Heart left ventricle (tissue), 16 donors: ENCODE measurements at regions of chr17 and their contacts with region 1.

Region 1: DNA sequence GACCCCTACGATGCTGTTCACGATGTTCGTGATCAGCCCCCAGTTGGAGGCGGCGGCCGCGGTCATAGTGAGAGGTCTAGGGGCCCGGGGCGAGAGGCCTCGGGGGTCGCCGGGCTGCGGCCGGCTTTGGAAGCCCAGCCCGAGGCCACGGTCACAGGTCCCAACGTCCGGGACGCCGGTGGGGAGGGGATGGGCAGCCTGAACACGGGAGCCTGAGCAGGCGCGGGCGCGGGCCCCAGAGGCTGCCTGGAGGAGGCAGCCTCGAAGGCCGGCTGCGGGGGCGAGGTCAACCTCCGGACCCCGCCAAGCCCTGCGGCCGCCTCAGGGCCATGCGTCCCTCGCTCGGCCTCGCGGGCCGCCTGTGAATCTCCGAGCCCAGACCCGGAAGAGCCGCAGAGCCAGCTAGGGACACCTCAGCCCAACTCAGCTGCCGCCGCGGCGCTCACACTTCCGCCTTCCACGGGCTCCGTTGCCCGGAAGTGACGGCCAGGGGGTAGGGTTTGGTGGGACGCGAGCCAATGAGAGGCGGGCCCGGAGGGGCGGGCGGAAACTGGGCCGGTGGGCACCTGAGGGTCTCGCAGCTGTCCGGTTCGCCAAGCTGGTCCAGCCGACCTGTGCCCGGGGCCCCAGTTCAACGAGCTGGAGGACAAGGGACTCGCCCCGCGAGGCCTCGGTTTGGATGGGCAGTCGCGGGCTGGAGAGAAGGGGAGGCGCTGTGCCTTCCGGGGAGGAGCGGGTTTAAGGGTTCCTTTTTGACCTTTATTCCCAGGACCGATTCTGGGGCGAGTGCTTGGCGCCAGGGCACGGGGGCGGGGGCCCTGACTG is at the start of gene SLC38A10:
- DNase-seq: peak; percentile 93 to 98 (median 94)
- ATAC-seq: peak; percentile 81 to 94 (median 94)
- H3K4me3 ChIP-seq: peak within 1 kb of the TSS; percentile 57 to 97 (median 85)
- H3K27ac ChIP-seq: peak within 1 kb of the TSS; percentile 85 to 99 (median 96)
- H3K4me1 ChIP-seq: peaks cover 8 to 49% (median 31%) of the 10 kb centered on the region in 12 donors
- H3K27me3 ChIP-seq: no peaks in the 10 kb centered on the region
- CTCF ChIP-seq: peak in 4 of 12 donors; percentile 16 to 63 (median 24)
- POLR2A ChIP-seq: peak; percentile 44 to 94
- total RNA-seq, gene SLC38A10: 27.4 to 67.7 (median 43.1) TPM

Region 2: DNA sequence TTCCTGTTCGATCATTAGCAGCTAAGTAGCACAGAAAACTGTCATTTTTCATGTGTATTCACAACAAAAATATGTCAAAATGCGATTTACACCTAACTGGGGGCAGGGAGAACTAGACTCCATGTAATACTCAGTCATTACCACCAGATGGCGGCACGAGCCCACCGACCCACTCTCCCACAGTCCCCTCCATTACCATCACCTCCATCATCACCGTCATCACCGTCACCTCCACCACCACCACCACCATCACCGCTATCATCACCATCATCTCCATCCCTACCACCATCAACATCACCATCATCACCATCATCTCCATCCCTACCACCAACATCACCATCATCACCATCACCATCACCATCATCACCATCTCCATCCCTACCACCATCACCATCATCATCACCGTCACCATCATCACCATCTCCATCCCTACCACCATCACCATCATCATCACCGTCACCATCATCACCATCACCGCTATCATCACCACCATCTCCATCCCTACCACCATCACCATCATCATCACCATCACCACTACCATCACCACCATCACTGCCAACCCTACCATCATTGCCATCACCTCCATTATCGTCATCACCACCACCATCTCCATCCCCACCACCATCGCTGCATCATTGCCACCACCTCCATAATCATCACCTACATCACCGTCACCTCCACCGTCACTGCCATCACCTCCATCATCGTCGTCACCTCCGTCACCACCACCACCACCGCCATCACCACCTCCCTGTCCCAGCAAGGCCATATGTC is 41.5 kb before region 1 on chr17:
- intact Hi-C with region 1: loop called in 3 of 10 experiments (anchors 2 to 5 kb)
- DNase-seq: peak in 1 of 5 donors; percentile 52
- ATAC-seq: peak in 3 of 4 donors; percentile 33 to 45 (median 35)
- H3K4me3 ChIP-seq: no peak overlapping the region
- H3K27ac ChIP-seq: no peak overlapping the region
- H3K4me1 ChIP-seq: peaks cover 3 to 19% (median 13%) of the 10 kb centered on the region in 12 donors
- H3K27me3 ChIP-seq: no peaks in the 10 kb centered on the region
- CTCF ChIP-seq: peak; percentile 66 to 88 (median 81)
- POLR2A ChIP-seq: no peak

Region 3: GRCh38 chr17:81346090-81346907 is 51.2 kb after region 1 on chr17:
- intact Hi-C with region 1: no loop called
- DNase-seq: peak; percentile 98 to 100 (median 99)
- ATAC-seq: peak; percentile 87 to 94 (median 92)
- H3K4me3 ChIP-seq: peak overlapping the region; percentile 39 to 93 (median 77)
- H3K27ac ChIP-seq: peak overlapping the region; percentile 82 to 99 (median 96)
- H3K4me1 ChIP-seq: peaks cover 0 to 60% (median 17%) of the 10 kb centered on the region in 12 donors
- H3K27me3 ChIP-seq: peaks cover 0 to 28% (median 0%) of the 10 kb centered on the region in 9 donors
- CTCF ChIP-seq: no peak
- POLR2A ChIP-seq: peak in 1 of 2 donors; percentile 91

Region 4: GRCh38 chr17:81381632-81382577 is 86.8 kb after region 1 on chr17:
- intact Hi-C with region 1: loop called in 3 of 10 experiments (anchors 5 to 10 kb)
- DNase-seq: peak in 1 of 5 donors; percentile 64
- ATAC-seq: no peak
- H3K4me3 ChIP-seq: no peak overlapping the region
- H3K27ac ChIP-seq: no peak overlapping the region
- H3K4me1 ChIP-seq: peaks cover 0 to 16% (median 10%) of the 10 kb centered on the region in 12 donors
- H3K27me3 ChIP-seq: peaks cover 0 to 5% (median 0%) of the 10 kb centered on the region in 9 donors
- CTCF ChIP-seq: no peak
- POLR2A ChIP-seq: no peak

Region 5: GRCh38 chr17:81387100-81388090 is 92.3 kb after region 1 on chr17:
- intact Hi-C with region 1: loop called in 5 of 10 experiments (anchors 2 to 10 kb)
- DNase-seq: peak in 4 of 5 donors; percentile 71 to 83 (median 78)
- ATAC-seq: peak; percentile 6 to 71 (median 45)
- H3K4me3 ChIP-seq: peak overlapping the region; percentile 61 to 91 (median 77)
- H3K27ac ChIP-seq: peak overlapping the region; percentile 79 to 100 (median 97)
- H3K4me1 ChIP-seq: peaks cover 5 to 66% (median 46%) of the 10 kb centered on the region in 12 donors
- H3K27me3 ChIP-seq: peaks cover 0 to 5% (median 0%) of the 10 kb centered on the region in 9 donors
- CTCF ChIP-seq: no peak
- POLR2A ChIP-seq: peak in 1 of 2 donors; percentile 48

Region 6: GRCh38 chr17:81394921-81395599 is 100.0 kb after region 1 on chr17 and contains the start of gene BAHCC1:
- intact Hi-C with region 1: loop called in 6 of 10 experiments (anchors 2 to 10 kb)
- DNase-seq: peak; percentile 100
- ATAC-seq: peak; percentile 80 to 89 (median 87)
- H3K4me3 ChIP-seq: peak within 1 kb of the TSS; percentile 57 to 95 (median 80)
- H3K27ac ChIP-seq: peak within 1 kb of the TSS; percentile 91 to 100 (median 97)
- H3K4me1 ChIP-seq: peaks cover 6 to 67% (median 30%) of the 10 kb centered on the region in 12 donors
- H3K27me3 ChIP-seq: peaks cover 0 to 14% (median 0%) of the 10 kb centered on the region in 9 donors
- CTCF ChIP-seq: no peak
- POLR2A ChIP-seq: peak; percentile 55 to 98
- total RNA-seq, gene BAHCC1: 6.0 to 19.6 (median 9.3) TPM

Region 7: DNA sequence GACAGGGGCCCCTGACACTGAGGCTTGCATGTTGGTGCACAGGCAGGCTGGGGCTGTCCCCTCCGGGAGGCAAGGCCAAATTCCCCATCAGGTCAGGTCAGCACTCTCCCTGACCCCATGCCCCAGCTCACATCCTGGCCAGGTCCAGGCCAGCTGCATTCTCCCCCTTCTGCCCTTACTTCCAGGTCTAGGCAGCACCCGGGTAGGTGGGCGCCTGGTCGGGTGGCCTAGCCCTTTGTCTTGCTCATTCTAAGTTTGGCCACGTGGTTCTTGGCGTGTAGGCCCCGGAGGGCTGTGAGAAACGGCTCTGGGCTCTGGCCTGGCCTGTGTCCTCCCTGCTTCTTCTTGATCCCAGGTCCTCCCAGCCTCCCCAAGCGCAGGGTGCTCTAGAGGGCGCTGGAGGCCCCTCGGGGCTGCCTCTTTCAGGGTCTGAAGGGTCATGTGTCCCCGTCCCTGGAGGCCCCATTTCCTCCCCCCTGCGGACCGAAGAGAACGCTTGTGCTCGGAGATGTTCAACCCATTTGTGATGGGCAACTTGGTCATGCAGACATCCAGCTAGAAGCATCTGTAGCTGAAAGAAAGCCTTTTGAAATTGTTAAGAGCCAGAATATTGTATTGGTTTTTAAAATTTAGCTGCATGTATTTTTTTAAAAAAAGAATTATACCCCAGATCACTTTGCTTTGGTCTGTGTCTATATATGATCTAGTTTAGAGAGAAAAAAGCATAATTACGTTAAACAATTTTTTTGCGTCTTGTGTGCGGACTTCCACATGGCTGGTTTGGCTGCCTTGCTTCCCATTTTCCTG is 106.9 kb after region 1 on chr17:
- intact Hi-C with region 1: loop called in 3 of 10 experiments (anchors 5 to 10 kb)
- DNase-seq: peak in 2 of 5 donors; percentile 74
- ATAC-seq: peak in 3 of 4 donors; percentile 6 to 16 (median 7)
- H3K4me3 ChIP-seq: peak overlapping the region in 8 of 12 donors; percentile 6 to 95 (median 80)
- H3K27ac ChIP-seq: peak overlapping the region; percentile 51 to 98 (median 97)
- H3K4me1 ChIP-seq: peaks cover 16 to 88% (median 66%) of the 10 kb centered on the region in 12 donors
- H3K27me3 ChIP-seq: peaks cover 0 to 15% (median 0%) of the 10 kb centered on the region in 9 donors
- CTCF ChIP-seq: peak in 10 of 12 donors; percentile 6 to 47 (median 24)
- POLR2A ChIP-seq: no peak

Region 8: DNA sequence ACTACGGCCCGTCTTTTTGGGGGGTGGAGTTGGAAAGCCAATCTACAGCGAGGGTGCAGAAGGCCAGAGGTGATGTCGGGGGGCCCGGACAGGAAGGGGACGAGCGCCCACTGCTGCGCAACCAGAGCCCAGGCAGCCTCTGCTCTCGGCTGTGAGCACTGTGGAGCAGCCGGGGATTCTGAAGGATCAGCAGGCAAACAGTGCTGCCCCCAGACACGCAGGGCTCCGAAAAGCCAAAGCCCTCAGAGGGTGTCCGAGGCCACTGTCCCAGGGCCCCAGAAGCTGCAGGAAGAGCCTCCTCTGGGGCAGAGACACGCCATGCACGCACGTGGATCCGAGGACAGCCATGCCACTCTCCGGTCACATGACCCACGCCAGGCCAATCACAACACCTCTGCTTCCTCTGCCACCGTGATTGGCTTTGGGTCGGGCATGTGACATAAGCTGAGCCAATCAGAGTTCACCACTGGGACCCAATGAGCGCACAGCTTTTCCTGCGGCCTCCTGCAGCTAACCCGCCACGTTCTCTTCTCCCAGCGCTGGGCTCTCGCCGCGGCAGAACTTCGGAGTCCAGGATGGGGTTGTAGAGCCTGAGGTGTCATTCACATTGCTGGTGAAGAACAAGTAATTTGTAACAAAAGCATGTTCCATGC is 176.9 kb after region 1 on chr17:
- intact Hi-C with region 1: no loop called
- DNase-seq: peak in 1 of 5 donors; percentile 60
- ATAC-seq: peak; percentile 21 to 53 (median 24)
- H3K4me3 ChIP-seq: peak overlapping the region in 1 of 12 donors; percentile 16
- H3K27ac ChIP-seq: peak overlapping the region in 1 of 12 donors; percentile 44
- H3K4me1 ChIP-seq: peaks cover 0 to 5% (median 0%) of the 10 kb centered on the region in 12 donors
- H3K27me3 ChIP-seq: no peaks in the 10 kb centered on the region
- CTCF ChIP-seq: peak in 2 of 12 donors; percentile 9 to 18
- POLR2A ChIP-seq: no peak